Heart right ventricle (tissue), 16 donors: ENCODE measurements at regions of chr1 and their contacts with region 1.

Region 1: GRCh38 chr1:245156081-245156735 is 1.4 kb downstream of the KIF26B start:
- DNase-seq: peak; percentile 81 to 83
- ATAC-seq: peak; percentile 83 to 93 (median 88)
- H3K4me3 ChIP-seq: peak overlapping the region; percentile 48 to 68 (median 66)
- H3K27ac ChIP-seq: peak overlapping the region in 1 of 10 donors; percentile 36
- H3K4me1 ChIP-seq: peaks cover 18 to 46% (median 37%) of the 10 kb centered on the region in 9 donors
- H3K27me3 ChIP-seq: peaks cover 0 to 89% (median 58%) of the 10 kb centered on the region in 7 donors
- CTCF ChIP-seq: peak; percentile 43 to 87 (median 77)

Region 2: DNA sequence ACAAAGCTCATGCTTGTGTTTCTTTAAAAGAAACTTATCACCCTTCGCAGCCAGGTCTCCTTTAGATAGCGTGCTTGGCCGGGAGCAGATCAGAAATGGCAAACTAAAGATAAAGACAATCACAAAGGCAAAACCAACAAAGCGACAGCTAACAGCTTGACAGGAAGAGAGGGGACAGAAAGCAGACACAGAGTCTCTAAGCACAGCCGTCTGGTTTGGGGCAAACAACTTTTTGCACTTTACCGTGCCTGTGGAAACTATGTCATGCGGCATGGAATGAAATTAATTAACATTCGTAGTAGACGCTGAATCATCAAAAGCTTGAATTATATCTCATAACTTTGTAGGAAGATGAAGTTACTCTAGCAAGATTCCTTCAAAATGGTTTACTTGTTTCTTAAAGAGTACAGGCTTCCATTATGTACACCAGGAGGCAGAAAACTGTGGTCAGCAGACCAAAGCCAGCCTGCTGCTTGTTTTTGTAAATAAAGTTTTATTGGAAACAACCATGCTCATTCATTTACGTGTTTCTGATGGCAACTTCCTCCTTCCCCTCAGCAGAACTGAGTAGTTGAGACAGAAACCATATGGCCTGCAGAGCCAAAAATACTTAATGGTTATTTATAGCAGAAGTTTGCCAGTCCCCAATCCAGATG is 181.7 kb after region 1 on chr1:
- intact Hi-C with region 1: loop called in 1 of 10 experiments (anchors 10 kb)
- DNase-seq: peak in 1 of 2 donors; percentile 27
- ATAC-seq: peak; percentile 29 to 91 (median 79)
- H3K4me3 ChIP-seq: no peak overlapping the region
- H3K27ac ChIP-seq: peak overlapping the region in 6 of 10 donors; percentile 2 to 60 (median 40)
- H3K4me1 ChIP-seq: peaks cover 0 to 6% (median 0%) of the 10 kb centered on the region in 9 donors
- H3K27me3 ChIP-seq: no peaks in the 10 kb centered on the region
- CTCF ChIP-seq: no peak

Region 3: GRCh38 chr1:245690156-245690690 is 534.0 kb after region 1 on chr1:
- intact Hi-C with region 1: loop called in 1 of 10 experiments (anchors 10 kb)
- DNase-seq: no peak
- ATAC-seq: peak in 4 of 8 donors; percentile 43 to 54 (median 45)
- H3K4me3 ChIP-seq: no peak overlapping the region
- H3K27ac ChIP-seq: no peak overlapping the region
- H3K4me1 ChIP-seq: no peaks in the 10 kb centered on the region
- H3K27me3 ChIP-seq: peaks cover 0 to 16% (median 4%) of the 10 kb centered on the region in 7 donors
- CTCF ChIP-seq: no peak

Region 4: DNA sequence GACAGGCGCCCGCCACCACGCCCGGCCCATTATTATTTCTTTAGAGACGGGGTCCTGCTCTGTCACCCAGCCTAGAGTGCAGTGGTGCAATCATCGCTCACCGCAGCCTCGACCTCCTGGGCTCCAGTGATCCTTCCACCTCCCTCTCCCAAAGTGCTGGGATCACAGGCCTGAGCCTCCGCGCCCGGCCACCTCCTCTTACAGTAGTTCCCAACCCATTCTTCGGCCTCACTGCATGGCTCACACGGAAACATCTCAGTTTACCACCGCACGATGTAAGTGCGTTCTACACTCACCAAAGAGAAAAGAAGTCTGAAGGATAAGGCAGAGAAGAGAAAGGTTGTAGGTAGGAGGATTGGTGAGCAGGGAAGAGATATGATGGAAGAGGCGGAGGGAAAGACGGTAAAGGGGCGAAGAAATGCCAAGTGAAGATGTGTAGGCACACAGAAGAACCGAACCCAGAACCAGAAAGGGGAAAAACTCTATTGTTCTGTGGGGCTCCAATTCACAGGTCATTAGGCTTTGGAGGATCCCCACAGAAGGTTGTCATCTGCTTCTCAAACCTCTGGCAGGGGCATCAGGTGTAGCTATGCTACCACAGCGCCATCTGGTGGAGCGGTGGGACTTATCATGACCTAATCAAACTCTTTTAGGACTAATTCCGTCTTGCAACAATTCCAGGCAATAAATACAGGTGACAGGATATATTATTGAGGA is 846.7 kb after region 1 on chr1:
- intact Hi-C with region 1: loop called (anchors 1 to 5 kb)
- DNase-seq: peak; percentile 84 to 85
- ATAC-seq: peak; percentile 60 to 86 (median 80)
- H3K4me3 ChIP-seq: no peak overlapping the region
- H3K27ac ChIP-seq: no peak overlapping the region
- H3K4me1 ChIP-seq: peaks cover 0 to 9% (median 4%) of the 10 kb centered on the region in 9 donors
- H3K27me3 ChIP-seq: no peaks in the 10 kb centered on the region
- CTCF ChIP-seq: peak; percentile 82 to 92 (median 90)

Region 5: DNA sequence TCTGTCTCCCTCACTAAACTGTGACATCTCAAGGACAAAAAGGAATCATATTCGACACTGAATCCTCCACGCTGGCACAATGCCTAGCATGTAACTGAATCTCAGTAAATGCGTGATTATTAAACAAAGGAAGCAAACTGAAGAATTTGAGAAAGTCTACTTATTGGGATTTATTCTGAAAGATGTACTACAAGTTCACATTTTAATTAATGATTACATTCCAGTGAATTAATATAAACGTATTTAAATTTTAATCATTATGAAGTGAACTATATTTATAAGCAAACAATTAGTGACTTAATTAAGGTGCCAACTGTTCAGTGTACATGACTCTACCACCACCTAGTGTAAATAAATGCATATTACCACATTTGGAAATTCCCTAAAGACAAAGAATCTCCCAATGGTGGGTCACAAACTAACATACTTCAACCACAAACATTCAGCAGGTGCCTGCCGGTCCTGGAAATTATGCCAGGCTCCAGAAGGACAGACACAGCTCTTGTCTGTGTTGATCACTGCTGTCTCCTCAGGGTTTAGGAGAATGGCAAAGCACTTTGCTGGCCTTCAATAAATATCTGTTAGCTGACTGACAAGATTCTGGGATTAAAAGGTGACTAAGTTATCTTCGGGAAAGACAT is 1294.5 kb after region 1 on chr1:
- intact Hi-C with region 1: loop called in 7 of 10 experiments (anchors 5 to 10 kb)
- DNase-seq: no peak
- ATAC-seq: peak in 1 of 8 donors; percentile 34
- H3K4me3 ChIP-seq: no peak overlapping the region
- H3K27ac ChIP-seq: no peak overlapping the region
- H3K4me1 ChIP-seq: peaks cover 0 to 16% (median 9%) of the 10 kb centered on the region in 9 donors
- H3K27me3 ChIP-seq: no peaks in the 10 kb centered on the region
- CTCF ChIP-seq: peak; percentile 43 to 78 (median 68)